PC-9 (cell line): ENCODE measurements at regions of chr6 and their contacts with region 1.

Region 1: DNA sequence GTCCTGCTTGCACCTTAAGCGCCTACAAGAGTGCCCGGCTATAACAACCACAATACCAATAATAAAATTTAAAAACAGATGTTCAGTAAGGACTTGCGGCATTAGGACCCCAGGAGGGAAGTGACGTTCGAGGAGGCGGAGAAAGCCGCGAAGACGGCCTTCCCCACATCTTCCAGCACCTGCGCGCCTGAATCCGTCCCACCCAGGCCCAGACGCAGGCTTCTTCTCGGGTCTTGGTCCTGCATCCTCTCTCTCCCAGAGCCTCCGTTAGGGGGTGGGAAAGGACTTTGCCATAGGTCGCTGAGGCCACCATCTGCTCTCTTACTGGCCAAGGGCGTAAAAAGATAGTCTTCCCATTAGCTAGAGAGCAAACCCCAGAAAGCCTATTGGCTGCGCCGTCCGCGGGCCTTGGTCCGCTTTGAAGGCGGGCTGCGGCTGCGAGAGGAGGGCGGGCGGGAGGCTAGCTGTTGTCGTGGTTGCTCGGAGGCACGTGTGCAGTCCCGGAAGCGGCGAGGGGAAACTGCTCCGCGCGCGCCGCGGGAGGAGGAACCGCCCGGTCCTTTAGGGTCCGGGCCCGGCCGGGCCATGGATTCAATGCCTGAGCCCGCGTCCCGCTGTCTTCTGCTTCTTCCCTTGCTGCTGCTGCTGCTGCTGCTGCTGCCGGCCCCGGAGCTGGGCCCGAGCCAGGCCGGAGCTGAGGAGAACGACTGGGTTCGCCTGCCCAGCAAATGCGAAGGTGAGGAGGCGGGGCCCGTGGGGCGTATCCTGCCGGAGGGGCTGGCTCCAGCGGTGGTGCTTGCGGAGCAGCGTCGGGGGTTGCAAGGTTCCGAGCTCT is at the start of gene CNPY3:
- DNase-seq: peak; percentile 94
- H3K4me3 ChIP-seq: peak within 1 kb of the TSS; percentile 73
- H3K27ac ChIP-seq: peak within 1 kb of the TSS; percentile 67
- H3K4me1 ChIP-seq: peaks cover 16% of the 10 kb centered on the region
- H3K27me3 ChIP-seq: no peaks in the 10 kb centered on the region
- CTCF ChIP-seq: no peak
- total RNA-seq, gene CNPY3: 47.7 and 54.8 TPM in 2 replicates

Region 2: DNA sequence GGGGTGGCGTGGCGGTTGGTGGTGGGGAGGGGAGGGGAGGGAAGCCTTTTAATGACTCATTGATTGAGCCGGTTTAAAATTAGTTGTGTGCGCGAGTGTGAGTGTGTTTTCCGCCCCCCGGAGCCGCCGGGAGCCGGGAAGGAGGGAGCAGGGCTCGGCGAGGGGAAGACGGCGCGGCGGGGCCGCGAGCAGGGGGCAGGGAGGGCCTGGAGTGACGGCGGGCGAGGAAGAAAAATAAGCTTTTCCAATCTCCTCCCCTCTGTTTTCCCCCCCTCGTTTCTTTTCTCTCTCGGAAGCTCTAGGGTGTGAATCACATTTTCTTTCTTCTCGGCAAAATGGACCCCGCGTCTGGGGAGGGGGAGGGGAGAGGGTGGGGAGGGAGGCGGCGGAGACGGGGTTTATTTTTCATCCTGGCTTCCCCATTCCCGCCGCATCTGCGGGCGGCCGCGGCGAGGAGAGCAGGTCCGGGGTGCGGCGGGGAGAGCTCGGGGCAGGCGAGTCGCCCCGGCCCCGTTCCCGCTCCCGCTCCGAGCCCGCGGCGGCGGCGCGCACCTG is 146.5 kb before region 1 on chr6:
- CTCF ChIA-PET with region 1: no interaction called
- POLR2A ChIA-PET with region 1: interaction called, 10 read pairs
- intact Hi-C with region 1: no loop called
- DNase-seq: peak; percentile 60 to 62
- H3K4me3 ChIP-seq: peak overlapping the region; percentile 99
- H3K27ac ChIP-seq: peak overlapping the region; percentile 94
- H3K4me1 ChIP-seq: peaks cover 39% of the 10 kb centered on the region
- H3K27me3 ChIP-seq: no peaks in the 10 kb centered on the region
- CTCF ChIP-seq: no peak

Region 3: GRCh38 chr6:42947950-42948349 is 18.7 kb after region 1 on chr6:
- CTCF ChIA-PET with region 1: no interaction called
- POLR2A ChIA-PET with region 1: interaction called, 15 read pairs
- intact Hi-C with region 1: no loop called
- DNase-seq: no peak
- H3K4me3 ChIP-seq: no peak overlapping the region
- H3K27ac ChIP-seq: no peak overlapping the region
- H3K4me1 ChIP-seq: no peaks in the 10 kb centered on the region
- H3K27me3 ChIP-seq: no peaks in the 10 kb centered on the region
- CTCF ChIP-seq: no peak

Region 4: DNA sequence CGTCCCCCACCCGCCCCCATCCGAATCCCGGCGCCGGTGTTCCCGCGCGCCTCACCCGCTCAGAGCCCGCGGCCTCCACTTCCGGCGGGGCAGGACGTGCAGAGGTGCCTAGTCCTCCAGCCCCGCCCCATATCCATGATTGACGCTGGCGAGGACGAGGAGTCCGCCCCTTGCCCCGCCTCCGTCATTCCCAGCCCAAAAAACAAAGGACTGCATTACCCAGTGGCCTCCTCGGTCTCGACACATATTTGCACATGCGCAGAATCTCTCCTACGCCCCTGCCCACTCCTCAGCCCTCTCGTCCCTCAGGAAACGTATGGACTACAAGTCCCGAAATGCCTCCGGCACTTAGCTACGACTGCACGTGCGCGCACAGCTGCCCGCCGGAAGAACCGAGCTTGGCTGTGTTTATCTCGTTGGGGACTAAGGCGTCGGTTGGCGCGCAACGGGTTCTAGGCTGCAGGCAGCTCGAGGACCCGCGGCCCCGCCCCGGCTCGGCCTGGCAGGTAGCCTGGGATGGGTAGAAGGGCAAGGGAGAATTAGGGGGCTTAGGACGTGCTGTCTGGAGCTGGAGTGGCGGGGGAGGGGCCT is 84.7 kb after region 1 on chr6 and contains the starts of genes KLHDC3 and MEA1:
- CTCF ChIA-PET with region 1: no interaction called
- POLR2A ChIA-PET with region 1: interaction called, 16 read pairs
- intact Hi-C with region 1: loop called (anchors 5 kb)
- DNase-seq: peak; percentile 99
- H3K4me3 ChIP-seq: peak within 1 kb of the TSS; percentile 67
- H3K27ac ChIP-seq: peak within 1 kb of the TSS; percentile 18; the same call in 1 of the 2 replicates
- H3K4me1 ChIP-seq: peaks cover 18% of the 10 kb centered on the region
- H3K27me3 ChIP-seq: no peaks in the 10 kb centered on the region
- CTCF ChIP-seq: no peak
- total RNA-seq, gene KLHDC3: 104 and 122 TPM in 2 replicates
- total RNA-seq, gene MEA1: 77.0 and 77.6 TPM in 2 replicates

Region 5: GRCh38 chr6:43174263-43175112 is 245.3 kb after region 1 on chr6:
- CTCF ChIA-PET with region 1: no interaction called
- POLR2A ChIA-PET with region 1: no interaction called
- intact Hi-C with region 1: loop called (anchors 2 kb)
- DNase-seq: peak; percentile 96 to 98
- H3K4me3 ChIP-seq: peak overlapping the region; percentile 49; the same call in 1 of the 2 replicates
- H3K27ac ChIP-seq: peak overlapping the region; percentile 40
- H3K4me1 ChIP-seq: peaks cover 29% of the 10 kb centered on the region
- H3K27me3 ChIP-seq: no peaks in the 10 kb centered on the region
- CTCF ChIP-seq: no peak